HEK293 (cell line): ENCODE measurements at regions of chr1 and their contacts with region 1.

Region 1: GRCh38 chr1:93304716-93305138 is 41.0 kb upstream of the DR1 start:
- H3K4me3 ChIP-seq: no peak overlapping the region
- H3K27ac ChIP-seq: no peak overlapping the region
- H3K4me1 ChIP-seq: no peaks in the 10 kb centered on the region
- CTCF ChIP-seq: no peak

Region 2: GRCh38 chr1:92901126-92901525 is 403.6 kb before region 1 on chr1:
- CTCF ChIA-PET with region 1: no interaction called
- POLR2A ChIA-PET with region 1: no interaction called
- H3K4me3 ChIP-seq: no peak overlapping the region
- H3K27ac ChIP-seq: no peak overlapping the region
- H3K4me1 ChIP-seq: no peaks in the 10 kb centered on the region
- CTCF ChIP-seq: no peak

Region 3: GRCh38 chr1:93251966-93252365 is 52.8 kb before region 1 on chr1:
- CTCF ChIA-PET with region 1: no interaction called
- POLR2A ChIA-PET with region 1: no interaction called
- H3K4me3 ChIP-seq: no peak overlapping the region
- H3K27ac ChIP-seq: no peak overlapping the region
- H3K4me1 ChIP-seq: no peaks in the 10 kb centered on the region
- CTCF ChIP-seq: no peak

Region 4: DNA sequence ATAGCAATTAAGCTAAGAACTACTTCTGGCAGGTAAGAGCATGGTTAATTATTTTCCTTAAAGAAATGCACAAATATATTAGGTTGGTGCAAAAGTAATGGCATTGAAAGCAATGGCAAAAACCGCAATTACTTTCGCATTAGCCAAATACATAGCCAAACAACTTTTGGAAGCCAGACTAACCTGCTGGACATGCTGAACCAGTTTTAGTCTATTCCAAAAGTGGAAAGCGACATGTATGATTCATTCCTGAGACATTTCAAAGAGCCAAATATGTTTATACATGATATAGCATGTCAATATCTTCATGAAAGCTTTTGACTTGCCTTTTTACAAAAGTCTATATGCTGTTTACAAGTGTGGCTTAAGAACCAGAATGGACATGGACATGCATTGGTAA is 17.6 kb after region 1 on chr1:
- CTCF ChIA-PET with region 1: interaction called, 16 read pairs
- POLR2A ChIA-PET with region 1: no interaction called
- H3K4me3 ChIP-seq: no peak overlapping the region
- H3K27ac ChIP-seq: no peak overlapping the region
- H3K4me1 ChIP-seq: peaks cover 6% of the 10 kb centered on the region; the same call in 1 of the 2 replicates
- CTCF ChIP-seq: no peak

Region 5: DNA sequence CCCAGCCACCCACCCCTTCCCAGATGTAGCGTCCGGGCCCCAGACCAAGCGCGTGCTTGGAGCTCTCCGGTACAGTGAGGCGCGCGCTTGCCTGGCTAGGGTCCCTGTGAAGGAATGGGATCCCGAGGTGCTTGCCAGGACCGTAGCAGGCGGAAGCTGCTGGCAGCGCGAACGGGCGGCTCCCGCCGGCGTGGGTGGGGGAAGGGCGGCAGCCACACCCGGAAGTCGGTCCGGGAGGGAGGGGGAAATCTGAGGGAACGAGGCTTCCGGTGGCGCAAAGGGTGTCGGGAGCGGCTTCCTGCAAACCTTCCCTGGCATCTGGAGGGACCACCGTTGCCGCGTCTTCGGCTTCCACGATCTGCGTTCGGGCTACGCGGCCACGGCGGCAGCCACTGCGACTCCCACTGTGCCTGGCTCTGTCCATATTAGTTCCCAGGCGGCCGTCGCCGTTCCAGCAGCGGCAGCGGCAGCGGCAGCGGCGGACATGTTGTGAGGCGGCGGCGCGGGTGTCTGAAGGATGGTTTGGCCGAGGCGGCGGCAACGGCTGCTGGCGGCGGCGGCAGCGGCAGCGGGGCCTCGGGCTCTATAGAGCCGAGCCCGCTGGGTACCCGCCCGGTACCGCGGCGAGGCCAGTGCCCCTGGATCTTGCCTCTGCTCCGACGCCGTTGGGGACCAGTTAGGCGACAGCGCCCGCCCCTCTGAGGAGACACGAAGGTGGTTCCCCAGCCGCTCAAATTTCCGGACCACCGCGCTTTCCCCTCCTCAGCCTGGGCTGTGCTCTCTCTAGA is 41.1 kb after region 1 on chr1 and contains the start of gene DR1:
- CTCF ChIA-PET with region 1: interaction called, 7 read pairs
- POLR2A ChIA-PET with region 1: interaction called, 10 read pairs
- H3K4me3 ChIP-seq: peak within 1 kb of the TSS; percentile 99
- H3K27ac ChIP-seq: peak within 1 kb of the TSS; percentile 98
- H3K4me1 ChIP-seq: peaks cover 3% of the 10 kb centered on the region; the same call in 1 of the 2 replicates
- CTCF ChIP-seq: no peak; the same call in 1 of the 2 replicates

Region 6: GRCh38 chr1:93433407-93433961 is 128.8 kb after region 1 on chr1:
- CTCF ChIA-PET with region 1: interaction called, 16 read pairs
- POLR2A ChIA-PET with region 1: no interaction called
- H3K4me3 ChIP-seq: no peak overlapping the region
- H3K27ac ChIP-seq: no peak overlapping the region
- H3K4me1 ChIP-seq: no peaks in the 10 kb centered on the region
- CTCF ChIP-seq: no peak

Region 7: GRCh38 chr1:93814059-93814794 is 509.5 kb after region 1 on chr1:
- CTCF ChIA-PET with region 1: interaction called, 12 read pairs
- POLR2A ChIA-PET with region 1: no interaction called
- H3K4me3 ChIP-seq: no peak overlapping the region
- H3K27ac ChIP-seq: no peak overlapping the region
- H3K4me1 ChIP-seq: no peaks in the 10 kb centered on the region
- CTCF ChIP-seq: peak; percentile 95